HEK293T (cell line): ENCODE measurements at regions of chr15 and their contacts with region 1.

Region 1: DNA sequence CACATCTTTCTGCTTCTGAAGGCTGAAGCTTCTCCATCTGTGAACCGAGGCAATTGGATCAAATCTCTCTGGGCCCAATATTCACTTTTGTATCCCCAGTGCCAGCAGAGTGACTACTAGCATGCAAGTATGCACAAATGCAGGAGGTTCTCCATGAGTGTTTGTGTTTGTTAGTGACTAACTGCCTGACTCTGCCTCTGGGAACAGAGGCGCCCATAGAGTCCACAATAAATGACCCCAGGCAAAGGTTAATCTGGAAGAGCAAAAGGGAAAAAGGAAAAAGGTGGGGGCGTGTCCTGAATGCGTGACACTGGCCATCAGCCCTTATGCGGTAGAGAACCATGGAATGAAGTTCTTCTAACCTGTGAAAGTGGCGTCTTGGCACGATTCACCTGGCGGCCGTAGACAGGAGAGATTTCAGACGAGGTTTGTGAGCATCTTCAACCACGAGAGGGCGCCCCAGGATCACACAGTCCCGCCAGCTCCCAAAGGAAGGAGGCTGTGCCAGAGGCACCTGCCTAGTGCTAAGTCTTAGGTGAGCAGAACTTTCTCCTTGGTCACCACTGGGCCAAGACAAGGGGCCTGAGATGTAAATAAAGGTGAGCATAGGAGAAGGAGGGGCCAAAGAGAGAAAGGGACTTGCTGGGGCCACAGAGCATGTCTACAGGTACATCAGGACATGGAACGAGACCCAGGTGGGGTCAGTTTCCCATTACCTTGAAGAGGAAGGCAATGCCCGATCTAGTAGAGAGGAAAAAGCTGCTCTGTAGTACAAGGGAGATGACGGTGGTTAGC is 44.2 kb downstream of the RBPMS2 start:
- DNase-seq: peak; percentile 68

Region 2: DNA sequence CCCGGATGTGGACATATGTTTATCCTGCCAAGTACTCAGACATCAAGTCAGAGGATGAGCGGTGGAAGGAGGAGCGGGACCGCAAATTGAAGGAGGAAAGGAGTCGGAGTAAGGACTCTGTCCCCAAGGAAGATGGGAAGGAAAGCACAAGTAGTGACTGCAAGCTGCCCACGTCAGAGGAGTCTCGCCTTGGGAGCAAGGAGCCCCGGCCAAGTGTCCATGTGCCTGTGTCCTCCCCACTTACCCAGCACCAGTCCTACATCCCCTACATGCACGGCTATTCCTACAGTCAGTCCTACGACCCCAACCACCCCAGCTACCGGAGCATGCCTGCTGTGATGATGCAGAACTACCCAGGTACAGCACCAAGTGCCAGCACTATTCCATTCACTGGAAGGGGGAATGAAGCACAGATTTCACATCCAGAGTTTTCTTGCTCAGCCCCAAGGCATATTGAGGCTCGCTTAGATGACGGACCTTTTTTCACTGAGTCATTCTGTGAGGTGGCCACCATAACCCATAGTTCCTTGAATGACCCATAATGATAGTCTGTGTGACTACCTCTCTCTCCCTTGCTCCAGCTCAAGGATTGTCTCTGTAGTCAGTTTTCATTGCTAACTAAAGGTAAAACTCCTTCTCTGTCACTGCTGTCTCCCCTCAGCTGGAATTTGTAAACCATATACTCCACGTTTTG is 52.9 kb before region 1 on chr15:
- CTCF ChIA-PET with region 1: interaction called, 12 read pairs
- POLR2A ChIA-PET with region 1: no interaction called
- DNase-seq: no peak

Region 3: DNA sequence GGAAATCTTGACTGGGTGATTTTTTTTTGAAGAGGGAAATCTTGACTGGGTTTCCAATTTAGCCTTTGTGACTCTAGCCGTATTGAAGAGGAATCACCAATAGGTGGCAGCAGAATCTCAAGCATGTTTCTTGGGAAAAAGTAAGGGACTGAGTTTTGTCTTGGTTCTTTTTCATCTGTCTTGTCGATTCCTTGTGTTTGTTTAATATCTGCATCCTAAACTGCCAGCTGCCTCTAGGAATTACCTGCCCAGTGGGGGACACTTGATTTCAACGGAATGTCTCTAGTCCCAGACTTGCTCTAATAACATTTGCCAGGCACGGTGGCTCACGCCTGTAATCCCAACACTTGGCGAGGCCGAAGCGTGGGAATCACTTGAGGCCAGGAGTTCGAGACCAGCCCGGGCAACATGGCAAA is 45.0 kb before region 1 on chr15:
- CTCF ChIA-PET with region 1: interaction called, 24 read pairs
- POLR2A ChIA-PET with region 1: interaction called, 4 read pairs
- DNase-seq: peak; percentile 37

Region 4: GRCh38 chr15:64706011-64706911 is 24.9 kb before region 1 on chr15:
- CTCF ChIA-PET with region 1: no interaction called
- POLR2A ChIA-PET with region 1: no interaction called
- DNase-seq: no peak

Region 5: GRCh38 chr15:64754663-64755426 is 23.6 kb after region 1 on chr15:
- CTCF ChIA-PET with region 1: no interaction called
- POLR2A ChIA-PET with region 1: no interaction called
- DNase-seq: no peak

Region 6: DNA sequence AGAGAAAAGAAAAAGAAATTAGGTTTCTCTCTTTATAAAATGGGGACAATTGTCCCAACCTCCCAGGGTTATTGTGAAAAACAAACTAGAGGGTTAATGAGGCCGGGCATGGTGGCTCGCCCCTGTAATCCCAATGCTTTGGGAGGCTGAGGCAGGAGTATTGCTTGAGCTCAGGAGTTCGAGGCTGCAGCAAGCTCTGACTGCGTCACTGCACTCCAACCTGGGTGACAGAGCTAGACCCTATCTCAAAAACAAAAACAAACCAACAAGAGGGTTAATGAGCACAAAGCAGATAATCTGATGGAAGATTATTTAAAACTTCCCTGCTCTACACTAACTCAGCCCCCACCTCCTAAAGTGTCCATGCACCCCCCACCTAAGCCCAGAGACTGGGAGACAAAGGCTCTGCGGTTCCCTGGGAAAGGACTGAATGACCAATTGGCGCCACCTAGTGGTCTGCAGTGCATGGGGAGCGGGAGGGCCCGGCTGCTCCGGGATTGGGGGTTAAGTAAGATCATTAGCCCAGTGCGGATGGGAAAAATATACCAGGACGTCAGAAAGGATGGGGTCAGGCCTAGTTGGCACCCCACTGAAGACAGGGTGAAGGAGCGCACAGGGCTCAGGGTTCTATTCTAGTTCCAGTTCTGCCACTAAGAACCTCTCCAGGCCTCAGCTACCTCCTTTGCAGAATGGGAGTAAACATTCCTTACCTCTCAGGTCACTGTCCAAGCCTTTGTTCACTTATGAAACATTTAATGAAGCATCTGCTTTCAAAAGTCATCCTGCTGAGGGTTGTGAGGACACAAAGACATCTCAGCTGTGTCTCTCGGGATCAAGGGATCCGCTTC is 78.7 kb after region 1 on chr15:
- CTCF ChIA-PET with region 1: interaction called, 23 read pairs
- POLR2A ChIA-PET with region 1: no interaction called
- DNase-seq: peak; percentile 79